Activated CD4-positive, alpha-beta T cell treated with anti-CD3 and anti-CD28 coated beads, Interleukin-2, amount 10 ng/mL, durations not matched to agents 24 days and 14 days (primary cell): ENCODE measurements at regions of chr9 and their contacts with region 1.

Region 1: GRCh38 chr9:116661037-116661954 is 25.8 kb upstream of the TRIM32 start:
- DNase-seq: peak; percentile 68
- H3K4me3 Mint-ChIP-seq: no peak overlapping the region
- H3K27ac Mint-ChIP-seq: no peak overlapping the region
- H3K4me1 Mint-ChIP-seq: no peaks in the 10 kb centered on the region
- H3K27me3 Mint-ChIP-seq: no peaks in the 10 kb centered on the region

Region 2: GRCh38 chr9:115591584-115591984 is 1069.7 kb before region 1 on chr9:
- intact Hi-C with region 1: loop called (anchors 5 kb)
- DNase-seq: peak; percentile 57
- H3K4me3 Mint-ChIP-seq: no peak overlapping the region
- H3K27ac Mint-ChIP-seq: no peak overlapping the region
- H3K4me1 Mint-ChIP-seq: no peaks in the 10 kb centered on the region
- H3K27me3 Mint-ChIP-seq: peaks cover 15% of the 10 kb centered on the region

Region 3: DNA sequence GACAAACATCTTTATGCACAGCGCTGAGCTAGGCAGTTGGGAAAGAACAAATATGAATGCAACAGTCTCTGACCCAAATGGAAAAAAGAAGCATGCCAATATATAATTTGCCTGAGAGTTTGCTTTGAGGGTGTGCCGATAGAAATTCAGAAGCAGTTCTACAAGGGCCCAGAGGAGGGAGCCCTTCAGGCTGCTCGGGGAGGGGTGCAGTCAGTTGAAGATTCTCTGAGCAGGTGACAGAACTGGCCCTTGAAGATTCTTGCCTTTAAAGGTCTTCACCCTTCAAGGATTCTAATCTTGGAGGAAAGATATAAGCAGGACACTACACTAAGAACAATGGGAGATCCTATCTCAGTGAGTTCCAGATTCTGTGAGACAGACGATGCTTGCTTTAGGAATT is 511.5 kb before region 1 on chr9:
- intact Hi-C with region 1: loop called (anchors 10 kb)
- DNase-seq: no peak
- H3K4me3 Mint-ChIP-seq: no peak overlapping the region
- H3K27ac Mint-ChIP-seq: no peak overlapping the region
- H3K4me1 Mint-ChIP-seq: peaks cover 2% of the 10 kb centered on the region
- H3K27me3 Mint-ChIP-seq: peaks cover 39% of the 10 kb centered on the region

Region 4: GRCh38 chr9:116219686-116220085 is 441.6 kb before region 1 on chr9:
- intact Hi-C with region 1: no loop called
- DNase-seq: no peak
- H3K4me3 Mint-ChIP-seq: no peak overlapping the region
- H3K27ac Mint-ChIP-seq: no peak overlapping the region
- H3K4me1 Mint-ChIP-seq: no peaks in the 10 kb centered on the region
- H3K27me3 Mint-ChIP-seq: no peaks in the 10 kb centered on the region

Region 5: GRCh38 chr9:116589392-116590354 is 71.6 kb before region 1 on chr9:
- intact Hi-C with region 1: loop called (anchors 5 kb)
- DNase-seq: peak; percentile 70
- H3K4me3 Mint-ChIP-seq: no peak overlapping the region
- H3K27ac Mint-ChIP-seq: no peak overlapping the region
- H3K4me1 Mint-ChIP-seq: no peaks in the 10 kb centered on the region
- H3K27me3 Mint-ChIP-seq: no peaks in the 10 kb centered on the region

Region 6: GRCh38 chr9:116701949-116702642 is 40.8 kb after region 1 on chr9:
- intact Hi-C with region 1: no loop called
- DNase-seq: no peak
- H3K4me3 Mint-ChIP-seq: peak overlapping the region; percentile 8
- H3K27ac Mint-ChIP-seq: peak overlapping the region; percentile 52
- H3K4me1 Mint-ChIP-seq: peaks cover 15% of the 10 kb centered on the region
- H3K27me3 Mint-ChIP-seq: no peaks in the 10 kb centered on the region

Region 7: GRCh38 chr9:116939614-116940013 is 278.3 kb after region 1 on chr9:
- intact Hi-C with region 1: no loop called
- DNase-seq: no peak
- H3K4me3 Mint-ChIP-seq: no peak overlapping the region
- H3K27ac Mint-ChIP-seq: no peak overlapping the region
- H3K4me1 Mint-ChIP-seq: no peaks in the 10 kb centered on the region
- H3K27me3 Mint-ChIP-seq: no peaks in the 10 kb centered on the region